HCT116 (cell line): ENCODE measurements at regions of chr2 and their contacts with region 1.

Region 1: DNA sequence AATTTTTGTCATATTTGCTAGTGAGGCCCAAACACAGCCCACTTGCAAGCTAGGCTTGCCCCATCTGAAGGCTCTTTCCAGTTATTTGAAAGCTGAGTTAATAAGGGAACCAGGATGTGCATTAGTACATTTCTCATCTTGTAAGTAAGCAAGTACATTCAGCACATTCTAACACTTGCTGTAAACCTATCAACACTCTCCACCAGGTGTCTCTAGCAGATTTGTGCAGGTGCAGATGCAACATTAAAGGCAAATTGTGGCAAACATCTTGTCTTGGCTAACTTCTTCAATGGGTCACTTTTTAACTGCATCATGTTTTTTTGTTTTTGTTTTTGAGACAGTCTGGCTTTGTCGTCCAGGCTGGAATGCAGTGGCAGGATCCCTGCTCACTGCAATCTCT is 25.3 kb upstream of the MFSD6 start:
- DNase-seq: peak; percentile 57
- ATAC-seq: peak; percentile 87
- H3K4me3 ChIP-seq: no peak overlapping the region
- H3K27ac ChIP-seq: no peak overlapping the region
- H3K4me1 ChIP-seq: no peaks in the 10 kb centered on the region
- H3K27me3 ChIP-seq: no peaks in the 10 kb centered on the region
- CTCF ChIP-seq: peak; percentile 63 to 77 (median 69)
- POLR2A ChIP-seq: no peak
- RAD21 ChIP-seq: peak; percentile 92

Region 2: DNA sequence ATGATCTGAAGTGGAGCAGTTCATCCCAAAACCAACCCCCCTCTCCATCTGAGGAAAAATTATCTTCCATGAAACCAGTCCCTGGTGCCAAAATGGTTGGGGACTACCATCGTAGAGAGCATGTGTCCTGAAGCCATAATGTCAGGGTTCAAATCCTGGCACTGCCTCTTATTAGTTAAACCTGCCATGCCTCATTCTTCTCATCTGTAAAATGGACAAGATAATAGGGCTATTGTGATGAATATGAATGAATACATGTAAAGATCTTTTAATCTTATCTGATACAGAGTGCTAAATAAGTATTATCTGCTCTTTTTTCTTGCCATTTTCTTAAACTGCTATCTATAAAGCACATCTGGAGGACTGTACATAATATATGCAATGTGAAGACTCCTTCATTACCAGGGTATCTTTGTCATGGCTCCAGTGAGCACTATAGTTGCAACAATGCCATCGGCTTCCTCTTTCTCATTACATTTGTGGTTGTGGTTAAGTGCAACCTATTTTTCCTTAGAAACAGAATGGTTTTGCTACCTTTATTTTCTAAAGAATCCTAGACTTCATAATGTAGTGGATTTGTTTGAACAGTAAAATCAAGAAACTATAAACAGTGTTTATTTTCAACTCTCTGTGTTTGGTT is 52.3 kb after region 1 on chr2:
- CTCF ChIA-PET with region 1: no interaction called
- POLR2A ChIA-PET with region 1: no interaction called
- RAD21 ChIA-PET with region 1: no interaction called
- intact Hi-C with region 1: no loop called
- DNase-seq: no peak
- ATAC-seq: no peak
- H3K4me3 ChIP-seq: no peak overlapping the region
- H3K27ac ChIP-seq: no peak overlapping the region
- H3K4me1 ChIP-seq: no peaks in the 10 kb centered on the region
- H3K27me3 ChIP-seq: no peaks in the 10 kb centered on the region
- CTCF ChIP-seq: no peak
- POLR2A ChIP-seq: no peak
- RAD21 ChIP-seq: no peak

Region 3: DNA sequence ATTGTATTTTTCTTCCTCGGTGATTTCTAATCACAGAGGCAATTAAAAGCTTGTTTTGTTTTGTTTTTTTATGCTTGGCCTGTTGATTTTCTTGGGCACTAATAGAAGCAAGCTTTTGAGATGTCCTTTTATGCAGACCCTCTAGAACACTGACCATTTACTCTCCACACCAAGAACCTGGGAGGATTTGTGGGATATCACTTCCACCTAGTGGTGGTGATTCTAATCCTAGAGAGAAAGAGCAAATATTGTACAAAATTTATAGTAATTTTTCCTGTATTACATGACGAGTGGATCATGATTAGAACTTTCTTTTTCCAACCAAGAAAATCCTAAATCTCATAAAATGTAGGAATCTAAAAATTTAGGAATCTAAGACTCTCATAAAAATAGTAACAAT is 128.3 kb after region 1 on chr2:
- CTCF ChIA-PET with region 1: interaction called, 5 read pairs
- POLR2A ChIA-PET with region 1: no interaction called
- RAD21 ChIA-PET with region 1: no interaction called
- intact Hi-C with region 1: loop called (anchors 1 kb)
- DNase-seq: peak; percentile 3
- ATAC-seq: no peak
- H3K4me3 ChIP-seq: no peak overlapping the region
- H3K27ac ChIP-seq: no peak overlapping the region
- H3K4me1 ChIP-seq: no peaks in the 10 kb centered on the region
- H3K27me3 ChIP-seq: no peaks in the 10 kb centered on the region
- CTCF ChIP-seq: peak; percentile 31 to 71 (median 55); a peak in 5 of 6 replicates
- POLR2A ChIP-seq: no peak
- RAD21 ChIP-seq: peak; percentile 83

Region 4: DNA sequence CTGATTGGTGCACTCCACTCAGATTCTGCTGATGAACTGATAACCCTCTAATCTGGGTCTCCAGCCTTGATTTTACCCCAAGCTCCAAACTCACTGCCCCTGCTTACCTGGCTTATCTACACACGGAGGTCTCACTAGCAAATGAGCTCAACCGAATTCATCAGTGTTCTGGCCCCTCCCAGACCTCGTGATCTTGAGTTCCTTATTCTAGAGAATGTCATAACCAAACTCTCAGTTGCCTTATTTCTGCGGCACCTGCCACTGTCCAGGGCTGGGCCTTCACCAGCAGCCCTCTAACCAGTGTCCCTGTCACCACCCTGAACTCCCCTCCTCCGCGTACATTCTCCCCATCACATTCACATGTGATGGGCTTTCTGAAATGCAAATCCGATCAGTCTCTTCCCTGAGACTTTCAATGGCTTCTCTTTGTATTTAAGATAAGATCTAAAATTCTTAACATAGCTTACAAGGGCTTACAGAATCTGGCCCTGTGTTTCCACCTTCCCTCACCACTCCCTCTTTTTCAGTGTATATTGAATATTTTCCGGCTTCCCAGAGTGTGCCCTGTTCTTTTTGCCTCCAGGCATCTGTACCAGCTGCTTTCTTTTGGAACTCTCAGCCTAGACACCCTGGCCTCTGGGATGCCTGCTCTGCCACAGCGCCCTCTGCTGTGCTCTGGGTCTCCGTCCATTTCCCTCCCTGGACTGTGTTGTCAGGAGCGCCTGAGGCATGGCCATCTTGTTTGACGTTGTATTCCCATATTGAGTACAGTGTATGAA is 297.2 kb after region 1 on chr2:
- CTCF ChIA-PET with region 1: interaction called, 7 read pairs
- POLR2A ChIA-PET with region 1: no interaction called
- RAD21 ChIA-PET with region 1: no interaction called
- intact Hi-C with region 1: loop called (anchors 10 kb)
- DNase-seq: peak; percentile 16
- ATAC-seq: peak; percentile 96
- H3K4me3 ChIP-seq: no peak overlapping the region
- H3K27ac ChIP-seq: no peak overlapping the region
- H3K4me1 ChIP-seq: peaks cover 0 to 20% of the 10 kb centered on the region in 2 experiments; a peak in 2 of 4 replicates
- H3K27me3 ChIP-seq: no peaks in the 10 kb centered on the region
- CTCF ChIP-seq: peak; percentile 44 to 75 (median 72); a peak in 5 of 6 replicates
- POLR2A ChIP-seq: no peak
- RAD21 ChIP-seq: peak; percentile 65

Region 5: DNA sequence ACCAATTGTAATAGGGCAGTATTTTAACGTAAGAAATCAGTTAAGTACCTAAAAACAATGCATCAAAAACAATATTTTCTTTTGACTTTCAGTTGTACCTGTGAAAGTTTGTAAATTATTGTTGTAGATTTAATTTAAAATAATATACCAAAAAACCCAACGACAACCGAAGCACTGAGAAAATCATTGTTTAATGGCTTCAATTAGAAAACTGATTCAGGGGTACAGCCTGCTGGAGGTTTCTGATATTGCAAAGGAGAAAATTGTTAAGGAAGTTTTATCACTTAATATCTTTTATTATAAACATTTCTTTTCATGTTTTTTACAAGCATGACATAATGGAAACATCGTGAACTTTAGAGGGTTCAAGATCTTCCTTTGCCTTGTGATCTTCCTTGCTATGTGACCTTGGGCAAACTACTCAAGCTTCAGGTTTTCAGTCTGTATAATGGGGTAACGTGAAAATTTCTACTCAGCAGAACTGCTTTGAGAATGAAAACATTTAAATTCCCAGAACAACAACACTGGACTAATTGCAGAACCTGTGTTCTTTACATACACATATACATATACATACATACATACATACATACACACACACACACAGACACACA is 421.4 kb after region 1 on chr2:
- CTCF ChIA-PET with region 1: no interaction called
- POLR2A ChIA-PET with region 1: no interaction called
- RAD21 ChIA-PET with region 1: interaction called in 1 of 2 experiments, 5 read pairs
- intact Hi-C with region 1: loop called (anchors 2 kb)
- DNase-seq: peak; percentile 16
- ATAC-seq: no peak; the same call in 1 of the 2 replicates
- H3K4me3 ChIP-seq: no peak overlapping the region
- H3K27ac ChIP-seq: no peak overlapping the region
- H3K4me1 ChIP-seq: no peaks in the 10 kb centered on the region
- H3K27me3 ChIP-seq: no peaks in the 10 kb centered on the region
- CTCF ChIP-seq: peak; percentile 35 to 58 (median 58); a peak in 5 of 6 replicates
- POLR2A ChIP-seq: no peak
- RAD21 ChIP-seq: peak; percentile 72